Caco-2 (cell line): ENCODE measurements at regions of chr15 and their contacts with region 1.

Region 1: DNA sequence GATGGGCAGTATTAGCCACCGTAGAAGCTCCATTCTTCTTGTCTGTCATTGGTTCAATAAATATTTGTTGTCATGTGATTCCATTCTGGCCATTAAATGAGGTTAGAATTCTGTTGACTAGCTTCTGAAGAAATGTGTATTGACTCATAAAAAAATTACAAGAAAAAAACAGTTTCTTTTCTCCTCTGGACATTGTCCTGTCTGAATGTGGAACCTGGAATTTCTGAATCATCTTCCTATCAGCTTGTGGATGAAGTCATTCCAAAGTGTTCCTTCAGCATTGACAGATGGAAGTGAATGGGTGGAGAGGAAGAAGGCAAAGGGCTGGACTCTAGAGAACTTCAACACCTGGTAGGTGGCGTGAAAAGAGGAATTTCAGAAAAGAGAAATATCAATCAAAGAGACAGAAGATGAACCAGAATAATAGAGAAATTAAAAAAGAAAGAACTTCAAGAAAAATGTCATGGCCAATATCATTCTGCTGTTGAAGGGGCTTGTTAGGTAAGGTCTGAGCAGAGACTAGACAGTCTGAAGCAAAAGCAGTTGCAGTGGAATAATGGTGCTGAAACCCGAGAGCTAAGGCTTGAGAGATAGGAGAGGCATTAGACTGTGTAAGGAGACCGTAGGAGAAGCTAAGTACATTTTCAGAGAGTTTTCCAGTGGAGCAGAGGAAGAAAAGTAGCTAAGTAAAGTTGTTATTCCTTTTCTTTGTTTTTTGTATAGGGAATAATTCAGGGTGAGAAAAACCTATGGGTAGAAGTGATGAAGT is 806.6 kb downstream of the SQOR start:
- DNase-seq: no peak
- H3K4me3 ChIP-seq: no peak overlapping the region
- H3K4me3 Mint-ChIP-seq: no peak overlapping the region
- H3K27ac Mint-ChIP-seq: no peak overlapping the region
- H3K4me1 ChIP-seq: no peaks in the 10 kb centered on the region
- H3K4me1 Mint-ChIP-seq: no peaks in the 10 kb centered on the region
- H3K27me3 ChIP-seq: no peaks in the 10 kb centered on the region
- H3K27me3 Mint-ChIP-seq: no peaks in the 10 kb centered on the region
- CTCF ChIP-seq: no peak

Region 2: DNA sequence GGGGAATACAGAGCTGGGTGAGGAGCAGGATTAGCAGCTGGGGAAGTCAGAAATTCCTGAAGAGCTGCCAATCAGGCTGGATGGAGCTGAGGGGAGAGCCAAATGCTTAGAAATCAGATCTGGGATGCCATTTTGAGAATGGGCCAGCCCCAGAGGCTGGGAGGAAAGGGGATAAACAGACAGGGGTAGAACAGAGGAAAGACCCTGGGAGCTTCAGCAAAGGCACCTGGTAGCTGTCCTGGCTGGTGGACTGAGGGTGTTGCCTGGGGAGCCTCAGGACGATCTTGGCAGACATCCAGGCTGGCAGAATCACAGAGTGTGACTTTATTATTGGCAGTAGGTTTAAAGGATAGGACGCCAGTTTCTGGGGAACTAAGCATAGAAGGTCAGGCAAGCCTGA is 708.8 kb before region 1 on chr15:
- CTCF ChIA-PET with region 1: no interaction called
- POLR2A ChIA-PET with region 1: no interaction called
- intact Hi-C with region 1: no loop called
- DNase-seq: no peak
- H3K4me3 ChIP-seq: no peak overlapping the region
- H3K4me3 Mint-ChIP-seq: no peak overlapping the region
- H3K27ac Mint-ChIP-seq: no peak overlapping the region
- H3K4me1 ChIP-seq: no peaks in the 10 kb centered on the region
- H3K4me1 Mint-ChIP-seq: no peaks in the 10 kb centered on the region
- H3K27me3 ChIP-seq: no peaks in the 10 kb centered on the region; the same call in 1 of the 2 replicates
- H3K27me3 Mint-ChIP-seq: peaks cover 9% of the 10 kb centered on the region
- CTCF ChIP-seq: no peak

Region 3: DNA sequence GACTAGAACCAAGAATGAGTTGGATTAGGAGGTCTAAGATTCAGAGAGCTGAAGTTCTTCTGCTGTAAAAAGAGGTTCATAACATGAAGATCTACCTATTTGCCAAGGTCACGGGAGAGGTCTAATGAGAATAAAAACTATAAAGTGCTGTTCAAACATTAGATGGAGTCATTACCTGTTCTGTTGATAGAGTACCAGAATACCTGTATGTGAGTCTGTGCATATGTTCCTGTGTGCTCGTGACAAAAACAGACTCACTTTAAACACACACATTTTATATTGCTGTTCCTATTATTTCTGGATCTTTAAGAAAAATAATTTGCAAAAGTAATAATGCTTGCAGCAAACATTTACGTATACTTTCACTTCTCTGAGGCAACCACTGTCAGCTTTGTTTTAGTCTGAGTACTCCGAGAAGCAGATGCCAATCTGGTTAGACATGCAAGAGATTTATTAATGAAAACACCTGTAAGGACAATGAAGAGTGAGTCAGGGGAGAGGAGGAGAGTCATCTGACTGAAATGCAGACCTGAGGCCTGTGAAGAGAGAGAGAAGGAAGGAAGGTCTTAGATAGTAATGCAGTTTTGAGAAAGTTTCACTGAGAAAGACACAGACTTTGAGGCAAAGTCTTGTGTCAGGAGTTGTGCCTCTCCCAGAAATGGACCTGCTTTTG is 585.4 kb before region 1 on chr15:
- CTCF ChIA-PET with region 1: no interaction called
- POLR2A ChIA-PET with region 1: no interaction called
- intact Hi-C with region 1: no loop called
- DNase-seq: no peak
- H3K4me3 ChIP-seq: no peak overlapping the region
- H3K4me3 Mint-ChIP-seq: no peak overlapping the region
- H3K27ac Mint-ChIP-seq: no peak overlapping the region
- H3K4me1 ChIP-seq: peaks cover 10% of the 10 kb centered on the region
- H3K4me1 Mint-ChIP-seq: peaks cover 19% of the 10 kb centered on the region
- H3K27me3 ChIP-seq: no peaks in the 10 kb centered on the region
- H3K27me3 Mint-ChIP-seq: no peaks in the 10 kb centered on the region
- CTCF ChIP-seq: no peak

Region 4: DNA sequence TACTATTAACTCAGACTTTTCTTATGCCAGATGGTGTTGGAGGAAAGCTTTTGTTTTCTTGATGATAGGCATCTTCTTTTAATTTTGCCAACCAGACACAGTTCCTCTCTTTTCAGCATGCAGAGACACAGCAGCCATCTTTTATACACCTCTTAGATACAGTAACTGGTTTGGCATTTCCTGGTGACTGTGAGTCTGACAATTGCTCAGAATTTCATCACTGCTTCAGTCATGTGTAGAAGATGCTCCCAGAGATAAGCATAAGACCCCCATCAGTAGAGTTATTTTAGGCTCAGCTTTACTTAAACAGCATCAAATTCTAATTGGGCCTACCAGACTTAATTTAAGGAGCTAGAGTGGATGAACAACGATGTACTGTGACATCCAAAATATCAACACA is 27.7 kb before region 1 on chr15:
- CTCF ChIA-PET with region 1: no interaction called
- POLR2A ChIA-PET with region 1: no interaction called
- intact Hi-C with region 1: loop called (anchors 2 kb)
- DNase-seq: no peak
- H3K4me3 ChIP-seq: no peak overlapping the region
- H3K4me3 Mint-ChIP-seq: no peak overlapping the region
- H3K27ac Mint-ChIP-seq: no peak overlapping the region
- H3K4me1 ChIP-seq: no peaks in the 10 kb centered on the region
- H3K4me1 Mint-ChIP-seq: no peaks in the 10 kb centered on the region
- H3K27me3 ChIP-seq: no peaks in the 10 kb centered on the region
- H3K27me3 Mint-ChIP-seq: peaks cover 6% of the 10 kb centered on the region
- CTCF ChIP-seq: no peak